Prostate gland (tissue), 2 donors: ENCODE measurements at regions of chr18 and their contacts with region 1.

Region 1: GRCh38 chr18:2655178-2655953 is at the start of gene SMCHD1:
- DNase-seq: peak; percentile 88
- H3K4me3 ChIP-seq: peak within 1 kb of the TSS; percentile 87 to 98
- H3K27ac ChIP-seq: peak within 1 kb of the TSS; percentile 96 to 98
- H3K4me1 ChIP-seq: no peaks in the 10 kb centered on the region
- H3K27me3 ChIP-seq: no peaks in the 10 kb centered on the region
- CTCF ChIP-seq: peak in 2 of 4 experiments; percentile 16 to 20
- POLR2A ChIP-seq: peak; percentile 80
- total RNA-seq, gene SMCHD1: 56.0 to 65.1 TPM

Region 2: GRCh38 chr18:2571200-2572143 is 83.9 kb before region 1 on chr18 and contains the starts of genes METTL4 and NDC80:
- intact Hi-C with region 1: loop called (anchors 1 kb)
- DNase-seq: peak; percentile 70
- H3K4me3 ChIP-seq: peak within 1 kb of the TSS; percentile 56 to 65
- H3K27ac ChIP-seq: peak within 1 kb of the TSS; percentile 94 to 97
- H3K4me1 ChIP-seq: no peaks in the 10 kb centered on the region
- H3K27me3 ChIP-seq: no peaks in the 10 kb centered on the region
- CTCF ChIP-seq: no peak
- POLR2A ChIP-seq: peak; percentile 38
- total RNA-seq, gene METTL4: 5.2 to 8.3 TPM
- total RNA-seq, gene NDC80: 0.77 to 2.7 TPM

Region 3: GRCh38 chr18:3816610-3817363 is 1161.4 kb after region 1 on chr18:
- intact Hi-C with region 1: no loop called
- DNase-seq: no peak
- H3K4me3 ChIP-seq: no peak overlapping the region
- H3K27ac ChIP-seq: no peak overlapping the region
- H3K4me1 ChIP-seq: no peaks in the 10 kb centered on the region
- H3K27me3 ChIP-seq: no peaks in the 10 kb centered on the region
- CTCF ChIP-seq: no peak
- POLR2A ChIP-seq: no peak